ENCODE measurements at regions of chr2 and their contacts with region 1.

Region 1: GRCh38 chr2:172465417-172466334 is 38.3 kb downstream of the ITGA6 start:
- DNase-seq: peak; percentile 50
- ATAC-seq: peak; percentile 81

Region 2: GRCh38 chr2:172172513-172173173 is 293.0 kb before region 1 on chr2:
- intact Hi-C with region 1: loop called (anchors 1 kb)
- DNase-seq: peak; percentile 80
- ATAC-seq: peak; percentile 100

Region 3: GRCh38 chr2:172253190-172254052 is 212.3 kb before region 1 on chr2:
- intact Hi-C with region 1: no loop called
- DNase-seq: no peak
- ATAC-seq: peak; percentile 38

Region 4: DNA sequence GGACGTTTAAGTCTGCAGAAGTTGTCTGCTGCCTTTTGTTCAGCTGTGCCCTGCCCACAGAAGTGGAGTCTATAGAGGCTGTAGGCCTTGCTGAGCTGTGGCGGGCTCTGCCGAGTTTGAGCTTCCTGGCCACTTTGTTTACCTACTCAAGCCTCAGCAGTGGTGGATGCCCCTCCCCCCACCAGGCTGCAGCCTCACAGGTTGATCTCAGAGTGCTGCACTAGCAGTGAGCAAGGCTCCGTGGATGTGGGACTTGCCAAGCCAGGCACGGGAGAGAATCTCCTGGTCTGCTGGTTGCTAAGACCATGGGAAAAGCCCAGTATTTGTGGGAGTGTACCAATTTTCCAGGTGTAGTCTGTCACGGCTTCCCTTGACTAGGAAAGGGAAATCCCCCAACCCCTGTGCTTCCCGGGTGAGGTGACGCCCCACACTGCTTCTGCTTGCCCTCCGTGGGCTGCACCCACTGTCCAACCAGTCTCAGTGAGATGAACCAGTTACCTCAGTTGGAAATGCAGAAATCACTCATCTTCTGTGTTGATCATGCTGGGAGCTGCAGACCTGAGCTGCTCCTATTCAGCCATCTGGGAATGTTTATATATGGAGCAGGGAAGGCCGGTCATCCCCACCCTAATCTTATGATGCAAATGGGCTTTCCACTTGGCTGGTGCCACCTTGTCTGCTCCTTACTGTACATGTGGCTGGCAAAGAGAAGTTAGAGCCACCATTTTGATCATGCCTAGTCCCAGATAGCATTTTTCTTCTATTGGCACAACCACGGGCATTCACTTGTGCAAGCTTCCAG is 195.2 kb before region 1 on chr2:
- intact Hi-C with region 1: loop called (anchors 10 kb)
- DNase-seq: no peak
- ATAC-seq: no peak

Region 5: GRCh38 chr2:172427256-172427989 is 38.3 kb before region 1 on chr2 and contains the start of gene ITGA6:
- intact Hi-C with region 1: loop called (anchors 5 kb)
- DNase-seq: peak; percentile 82
- ATAC-seq: peak; percentile 88
- total RNA-seq, gene ITGA6: 44.4 TPM